CD8-positive, alpha-beta T cell (primary cell): ENCODE measurements at regions of chr14 and their contacts with region 1.

Region 1: DNA sequence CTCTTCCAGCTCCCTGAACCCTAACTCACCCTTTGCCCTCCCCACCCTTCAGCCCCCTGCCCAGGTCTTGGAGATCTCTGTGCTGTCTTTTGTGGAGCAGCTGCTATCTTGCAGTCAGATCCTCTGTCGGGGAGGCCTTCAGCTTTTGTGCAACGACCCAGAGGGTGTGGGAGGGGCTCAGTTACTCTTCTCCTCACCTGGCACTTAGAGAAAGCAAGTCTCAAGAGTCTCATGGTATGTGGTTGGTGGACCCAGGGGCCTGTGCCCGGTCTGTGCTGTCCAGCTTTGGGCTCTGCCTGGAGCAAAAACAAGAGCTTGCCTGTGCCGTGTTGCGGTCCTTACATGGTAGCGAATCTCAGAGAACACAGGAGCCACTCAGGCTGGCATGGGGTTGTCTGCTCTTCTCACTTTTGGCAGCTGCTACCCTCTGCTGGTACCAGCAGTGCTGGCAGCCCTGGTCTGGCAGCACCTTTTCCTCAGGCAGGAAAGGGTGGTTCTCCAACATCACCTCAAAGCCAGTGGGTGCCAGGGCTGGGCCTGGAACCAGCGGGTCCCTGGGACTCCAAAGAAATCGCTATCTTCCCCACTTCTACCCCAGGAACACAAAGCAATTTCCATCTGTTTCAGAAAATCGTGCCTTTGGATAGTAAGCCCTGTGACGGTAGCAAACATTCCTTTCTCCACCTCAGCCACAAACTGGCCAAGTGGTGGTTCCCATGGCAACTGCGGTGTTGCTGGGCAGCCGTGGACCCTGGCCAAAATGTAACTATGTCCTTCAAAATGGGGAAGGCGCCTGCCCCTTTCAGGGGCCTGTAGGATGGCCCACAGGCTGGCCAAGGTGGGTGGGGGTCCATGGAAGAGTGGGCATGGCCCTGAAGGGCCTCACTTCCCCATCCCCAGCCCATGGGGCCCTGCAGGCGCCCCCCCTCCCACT is 90.0 kb downstream of the RIN3 start:
- DNase-seq: peak; percentile 41 to 85 (median 63)
- ATAC-seq: peak; percentile 99
- H3K4me3 ChIP-seq: no peak overlapping the region
- H3K4me3 Mint-ChIP-seq: peak overlapping the region; percentile 72
- H3K27ac ChIP-seq: no peak overlapping the region
- H3K27ac Mint-ChIP-seq: peak overlapping the region; percentile 81
- H3K4me1 ChIP-seq: peaks cover 30% of the 10 kb centered on the region
- H3K4me1 Mint-ChIP-seq: peaks cover 47% of the 10 kb centered on the region
- H3K27me3 ChIP-seq: no peaks in the 10 kb centered on the region
- H3K27me3 Mint-ChIP-seq: no peaks in the 10 kb centered on the region
- CTCF ChIP-seq: peak; percentile 68

Region 2: GRCh38 chr14:92135267-92135666 is 468.3 kb before region 1 on chr14:
- CTCF ChIA-PET with region 1: interaction called, 15 read pairs
- POLR2A ChIA-PET with region 1: interaction called, 5 read pairs
- intact Hi-C with region 1: loop called (anchors 1 kb)
- DNase-seq: peak in 2 of 9 experiments; percentile 31 to 53
- ATAC-seq: no peak
- H3K4me3 ChIP-seq: no peak overlapping the region
- H3K4me3 Mint-ChIP-seq: no peak overlapping the region
- H3K27ac ChIP-seq: no peak overlapping the region
- H3K27ac Mint-ChIP-seq: no peak overlapping the region
- H3K4me1 ChIP-seq: no peaks in the 10 kb centered on the region
- H3K4me1 Mint-ChIP-seq: peaks cover 2% of the 10 kb centered on the region
- H3K27me3 ChIP-seq: no peaks in the 10 kb centered on the region
- H3K27me3 Mint-ChIP-seq: no peaks in the 10 kb centered on the region
- CTCF ChIP-seq: peak; percentile 37

Region 3: GRCh38 chr14:92450351-92451070 is 153.1 kb before region 1 on chr14:
- CTCF ChIA-PET with region 1: no interaction called
- POLR2A ChIA-PET with region 1: no interaction called
- intact Hi-C with region 1: no loop called
- DNase-seq: no peak
- ATAC-seq: no peak
- H3K4me3 ChIP-seq: no peak overlapping the region
- H3K4me3 Mint-ChIP-seq: no peak overlapping the region
- H3K27ac ChIP-seq: no peak overlapping the region
- H3K27ac Mint-ChIP-seq: no peak overlapping the region
- H3K4me1 ChIP-seq: peaks cover 9% of the 10 kb centered on the region
- H3K4me1 Mint-ChIP-seq: peaks cover 8% of the 10 kb centered on the region
- H3K27me3 ChIP-seq: no peaks in the 10 kb centered on the region
- H3K27me3 Mint-ChIP-seq: no peaks in the 10 kb centered on the region
- CTCF ChIP-seq: no peak

Region 4: GRCh38 chr14:92531106-92531873 is 72.3 kb before region 1 on chr14:
- CTCF ChIA-PET with region 1: interaction called, 3 read pairs
- POLR2A ChIA-PET with region 1: no interaction called
- intact Hi-C with region 1: loop called in 1 of 2 experiments (anchors 1 kb)
- DNase-seq: peak; percentile 65 to 98 (median 84)
- ATAC-seq: peak; percentile 85
- H3K4me3 ChIP-seq: peak overlapping the region in 1 of 2 experiments; percentile 15
- H3K4me3 Mint-ChIP-seq: peak overlapping the region; percentile 67
- H3K27ac ChIP-seq: peak overlapping the region; percentile 55 to 97
- H3K27ac Mint-ChIP-seq: peak overlapping the region; percentile 99
- H3K4me1 ChIP-seq: peaks cover 65% of the 10 kb centered on the region
- H3K4me1 Mint-ChIP-seq: peaks cover 75% of the 10 kb centered on the region
- H3K27me3 ChIP-seq: no peaks in the 10 kb centered on the region
- H3K27me3 Mint-ChIP-seq: no peaks in the 10 kb centered on the region
- CTCF ChIP-seq: no peak

Region 5: DNA sequence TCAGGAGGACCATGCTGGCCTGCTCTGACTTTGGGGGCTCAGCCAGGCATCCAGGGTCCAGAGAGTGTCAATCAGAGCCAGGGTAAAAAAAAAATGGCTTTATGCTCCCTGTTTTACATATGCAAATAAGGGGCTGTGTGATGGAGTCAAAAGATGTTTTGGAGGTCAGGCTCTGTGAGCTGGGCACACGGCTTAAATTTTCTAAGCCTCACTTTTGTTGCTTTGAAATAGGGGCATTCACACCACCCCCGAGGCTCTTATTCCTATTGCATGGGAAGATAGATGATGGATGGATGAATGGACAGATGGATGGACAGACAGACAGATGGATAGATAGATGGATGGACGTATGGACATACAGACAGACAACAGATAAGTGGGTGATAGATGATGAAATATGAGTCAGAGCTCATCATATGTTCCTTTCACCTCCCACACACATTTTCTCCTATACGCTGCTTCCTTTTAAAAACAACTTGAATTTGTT is 47.3 kb before region 1 on chr14:
- CTCF ChIA-PET with region 1: interaction called, 10 read pairs
- POLR2A ChIA-PET with region 1: no interaction called
- intact Hi-C with region 1: loop called (anchors 5 kb)
- DNase-seq: no peak
- ATAC-seq: peak; percentile 27
- H3K4me3 ChIP-seq: no peak overlapping the region
- H3K4me3 Mint-ChIP-seq: peak overlapping the region; percentile 23
- H3K27ac ChIP-seq: peak overlapping the region in 1 of 2 experiments; percentile 25
- H3K27ac Mint-ChIP-seq: peak overlapping the region; percentile 85
- H3K4me1 ChIP-seq: peaks cover 72% of the 10 kb centered on the region
- H3K4me1 Mint-ChIP-seq: peaks cover 85% of the 10 kb centered on the region
- H3K27me3 ChIP-seq: no peaks in the 10 kb centered on the region
- H3K27me3 Mint-ChIP-seq: no peaks in the 10 kb centered on the region
- CTCF ChIP-seq: no peak

Region 6: DNA sequence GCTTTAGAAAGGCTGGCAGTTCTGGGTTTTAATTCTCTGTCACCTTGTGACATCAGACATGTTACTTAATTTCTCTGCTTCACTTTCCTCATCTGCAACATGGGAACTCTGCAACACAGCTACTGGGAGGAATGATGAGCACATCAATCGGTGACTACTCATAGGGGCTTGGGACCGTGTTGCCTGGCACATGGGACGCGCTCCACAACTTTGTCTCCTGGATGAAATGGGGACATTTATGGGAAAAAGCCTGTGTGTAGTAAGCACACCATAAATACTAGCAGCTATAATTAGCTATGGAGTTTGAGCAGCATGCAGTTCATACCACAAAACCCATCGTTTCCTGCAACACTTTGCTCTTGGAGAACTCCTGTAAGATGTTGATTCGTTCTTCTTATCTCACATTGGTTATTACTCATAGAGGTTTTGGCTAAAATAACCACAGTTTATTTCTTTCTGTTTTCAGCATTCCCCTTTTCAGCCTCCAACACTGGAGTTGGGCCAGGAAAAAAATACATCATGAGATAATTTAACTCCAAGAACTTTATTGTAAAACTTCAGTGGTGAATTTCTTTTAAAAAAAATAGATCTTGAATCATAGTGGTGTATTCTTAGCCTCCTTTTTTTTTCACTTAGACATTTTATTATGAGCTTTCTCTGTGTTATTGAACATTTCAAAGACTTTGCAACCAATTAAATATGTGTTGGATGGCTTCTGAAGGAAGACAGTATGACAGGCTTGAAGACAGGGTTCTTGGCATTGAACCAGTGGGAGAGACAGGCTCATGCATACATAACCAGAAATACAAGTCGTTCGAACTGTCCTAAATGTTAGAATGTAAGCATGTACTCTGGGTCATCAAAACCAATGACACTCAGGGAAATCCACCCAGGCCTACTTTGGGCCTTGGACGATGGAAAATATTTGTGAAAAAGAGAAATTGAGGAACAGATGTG is 17.3 kb before region 1 on chr14:
- CTCF ChIA-PET with region 1: interaction called, 11 read pairs
- POLR2A ChIA-PET with region 1: interaction called, 17 read pairs
- intact Hi-C with region 1: no loop called
- DNase-seq: peak in 7 of 9 experiments; percentile 26 to 90 (median 62)
- ATAC-seq: peak; percentile 75
- H3K4me3 ChIP-seq: peak overlapping the region; percentile 9 to 38
- H3K4me3 Mint-ChIP-seq: peak overlapping the region; percentile 74
- H3K27ac ChIP-seq: peak overlapping the region; percentile 22 to 85
- H3K27ac Mint-ChIP-seq: peak overlapping the region; percentile 95
- H3K4me1 ChIP-seq: peaks cover 98% of the 10 kb centered on the region
- H3K4me1 Mint-ChIP-seq: peaks cover 97% of the 10 kb centered on the region
- H3K27me3 ChIP-seq: no peaks in the 10 kb centered on the region
- H3K27me3 Mint-ChIP-seq: no peaks in the 10 kb centered on the region
- CTCF ChIP-seq: no peak

Region 7: GRCh38 chr14:92686900-92687444 is 83.4 kb after region 1 on chr14:
- CTCF ChIA-PET with region 1: interaction called, 16 read pairs
- POLR2A ChIA-PET with region 1: no interaction called
- intact Hi-C with region 1: no loop called
- DNase-seq: peak; percentile 16 to 87 (median 49)
- ATAC-seq: peak; percentile 89
- H3K4me3 ChIP-seq: no peak overlapping the region
- H3K4me3 Mint-ChIP-seq: no peak overlapping the region
- H3K27ac ChIP-seq: no peak overlapping the region
- H3K27ac Mint-ChIP-seq: peak overlapping the region; percentile 57
- H3K4me1 ChIP-seq: peaks cover 2% of the 10 kb centered on the region
- H3K4me1 Mint-ChIP-seq: peaks cover 6% of the 10 kb centered on the region
- H3K27me3 ChIP-seq: no peaks in the 10 kb centered on the region
- H3K27me3 Mint-ChIP-seq: no peaks in the 10 kb centered on the region
- CTCF ChIP-seq: peak; percentile 92